Right ventricle myocardium inferior (tissue), 1 donor: ENCODE measurements at regions of chr17 and their contacts with region 1.

Region 1: DNA sequence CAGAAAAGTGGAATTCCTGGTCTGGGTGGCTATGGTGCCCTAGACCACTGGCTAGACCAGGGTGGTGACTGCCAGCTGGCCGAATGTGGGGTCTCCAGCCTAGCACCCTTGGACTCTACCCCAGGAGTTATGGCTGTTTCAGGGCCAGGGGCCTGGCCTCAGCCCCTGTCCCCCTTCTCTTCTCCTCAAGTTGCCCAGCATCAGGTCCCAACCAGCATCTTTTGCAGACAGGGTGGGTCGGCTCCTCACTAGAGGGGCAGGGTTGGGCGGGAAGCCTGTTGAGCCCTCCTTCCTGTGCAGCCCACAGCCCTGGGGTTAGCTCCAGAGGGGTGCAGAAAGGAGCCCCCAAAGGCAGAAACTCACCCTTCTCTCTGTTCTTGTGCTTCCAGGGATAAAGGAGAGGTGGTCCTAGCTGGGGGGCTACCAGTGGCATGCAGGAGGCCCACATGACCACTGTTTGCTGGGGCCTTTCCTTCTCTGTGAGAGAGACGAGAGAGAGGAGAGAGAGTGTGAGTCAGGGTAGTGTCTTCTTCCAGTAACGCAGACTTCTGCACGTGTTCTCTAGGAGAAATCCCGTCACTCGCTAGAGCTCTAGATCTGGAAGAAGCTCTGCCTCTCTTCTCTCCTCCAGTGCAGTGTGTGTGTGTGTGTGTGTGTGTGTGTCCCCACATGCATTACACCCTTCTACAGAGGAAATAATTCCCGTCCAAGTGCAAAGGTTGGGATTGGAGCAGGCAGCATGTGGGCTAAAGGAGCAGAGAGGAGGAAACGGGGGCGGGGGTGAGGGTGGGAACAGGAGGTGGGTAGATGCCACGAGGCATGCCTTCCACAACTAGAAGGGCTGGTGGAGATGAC is 209.4 kb downstream of the SEC14L1 start:
- DNase-seq: peak; percentile 45
- ATAC-seq: no peak

Region 2: GRCh38 chr17:77420804-77421629 is 70.8 kb after region 1 on chr17:
- intact Hi-C with region 1: loop called (anchors 2 kb)
- DNase-seq: peak; percentile 43
- ATAC-seq: no peak